AG04449 (cell line): ENCODE measurements at regions of chr3 and their contacts with region 1.

Region 1: GRCh38 chr3:27484015-27484844 is at the start of gene SLC4A7:
- DNase-seq: peak; percentile 64
- H3K4me3 ChIP-seq: peak within 1 kb of the TSS; percentile 80
- CTCF ChIP-seq: no peak

Region 2: DNA sequence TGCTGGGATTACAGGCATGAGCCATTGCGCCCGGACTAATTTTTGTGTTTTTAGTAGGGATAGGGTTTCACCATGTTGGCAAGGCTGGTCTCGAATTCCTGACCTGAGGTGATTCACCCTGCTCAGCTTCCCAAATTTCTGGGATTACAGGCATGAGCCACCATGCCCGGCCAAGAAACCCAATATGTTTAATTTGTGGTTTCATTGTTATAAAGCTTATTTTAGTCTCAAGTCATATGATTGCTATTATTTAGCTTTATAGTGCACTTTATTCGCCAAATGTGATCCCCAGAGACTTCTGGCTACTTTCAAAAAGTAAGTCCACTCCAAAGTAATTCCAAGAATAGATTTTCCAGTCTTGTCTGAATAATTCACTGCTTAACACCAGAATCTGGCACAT is 19.3 kb after region 1 on chr3:
- CTCF ChIA-PET with region 1: interaction called, 3 read pairs
- POLR2A ChIA-PET with region 1: interaction called, 10 read pairs
- DNase-seq: peak; percentile 53
- H3K4me3 ChIP-seq: no peak overlapping the region
- CTCF ChIP-seq: no peak

Region 3: GRCh38 chr3:27521179-27521871 is 37.1 kb after region 1 on chr3:
- CTCF ChIA-PET with region 1: no interaction called
- POLR2A ChIA-PET with region 1: interaction called, 12 read pairs
- DNase-seq: peak; percentile 63
- H3K4me3 ChIP-seq: no peak overlapping the region
- CTCF ChIP-seq: no peak

Region 4: GRCh38 chr3:27533718-27534573 is 49.7 kb after region 1 on chr3:
- CTCF ChIA-PET with region 1: no interaction called
- POLR2A ChIA-PET with region 1: interaction called, 18 read pairs
- DNase-seq: peak; percentile 98
- H3K4me3 ChIP-seq: no peak overlapping the region; the same call in 1 of the 2 replicates
- CTCF ChIP-seq: peak; percentile 79

Region 5: DNA sequence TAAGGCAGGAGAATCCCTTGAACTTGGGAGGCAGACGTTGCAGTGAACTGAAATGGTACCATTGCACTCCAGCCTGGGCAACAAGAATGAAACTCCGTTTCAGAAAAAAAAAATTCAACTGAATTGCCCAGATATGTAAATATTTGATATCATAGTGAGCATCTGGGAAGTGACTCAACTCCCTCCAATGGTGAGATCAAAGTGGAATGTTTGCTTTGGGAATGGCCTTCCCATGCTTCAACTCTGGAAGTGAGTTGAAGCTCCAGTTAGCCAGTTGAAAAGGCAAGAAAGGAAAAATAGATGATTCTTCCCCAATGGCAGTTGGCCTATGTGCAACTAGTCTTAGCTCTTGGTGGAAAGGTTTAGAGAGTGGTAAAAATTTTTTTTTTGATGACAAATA is 625.6 kb after region 1 on chr3:
- CTCF ChIA-PET with region 1: no interaction called
- POLR2A ChIA-PET with region 1: no interaction called
- DNase-seq: no peak
- H3K4me3 ChIP-seq: no peak overlapping the region
- CTCF ChIP-seq: no peak